Activated CD8-positive, alpha-beta T cell treated with anti-CD3 and anti-CD28 coated beads, Interleukin-2, amount 10 ng/mL, durations not matched to agents 7 days and 5 days (primary cell): ENCODE measurements at regions of chr2 and their contacts with region 1.

Region 1: DNA sequence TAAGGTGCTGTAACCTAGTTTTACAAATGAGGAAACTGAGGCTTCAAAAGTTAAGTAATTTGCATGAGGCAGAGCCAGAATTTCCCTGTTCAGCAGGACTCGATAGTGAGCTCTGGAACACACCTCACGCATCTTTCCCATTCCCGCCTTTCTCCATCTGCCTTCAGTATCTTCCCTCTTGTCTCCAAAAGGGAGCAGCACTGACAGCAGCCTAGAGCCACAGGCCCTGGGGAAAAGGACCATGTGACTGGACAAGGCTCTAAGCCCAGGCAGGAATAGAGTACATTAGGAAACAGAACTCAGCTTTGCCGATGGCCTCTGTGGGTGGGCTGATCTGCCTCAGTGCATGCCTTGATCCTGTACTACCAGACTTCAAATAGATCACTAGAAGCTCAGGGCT is 21.5 kb downstream of the GPR155 start:
- DNase-seq: no peak
- ATAC-seq: no peak
- H3K4me3 Mint-ChIP-seq: no peak overlapping the region
- H3K27ac Mint-ChIP-seq: no peak overlapping the region
- H3K4me1 Mint-ChIP-seq: no peaks in the 10 kb centered on the region
- H3K27me3 Mint-ChIP-seq: no peaks in the 10 kb centered on the region

Region 2: DNA sequence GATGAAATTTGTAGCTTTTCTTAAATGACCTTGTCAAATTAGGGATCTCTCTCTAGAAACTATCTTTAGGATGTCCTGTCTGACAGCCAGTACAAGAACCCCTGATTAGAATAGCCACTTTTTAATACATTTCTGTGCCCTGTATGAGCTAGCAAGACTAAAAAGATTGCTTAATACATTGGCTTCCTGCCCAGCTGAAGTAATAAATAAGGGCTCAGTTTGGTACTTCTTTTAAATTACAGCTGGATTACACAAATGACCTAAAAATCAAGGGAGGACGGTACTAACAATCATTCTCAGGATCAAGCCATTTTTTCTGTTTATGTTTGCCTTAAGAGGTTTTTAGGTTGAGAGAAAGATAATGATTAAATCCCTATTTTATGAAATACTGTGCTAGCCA is 205.3 kb before region 1 on chr2:
- CTCF ChIA-PET with region 1: no interaction called
- POLR2A ChIA-PET with region 1: no interaction called
- DNase-seq: no peak
- ATAC-seq: no peak
- H3K4me3 Mint-ChIP-seq: no peak overlapping the region
- H3K27ac Mint-ChIP-seq: no peak overlapping the region
- H3K4me1 Mint-ChIP-seq: no peaks in the 10 kb centered on the region
- H3K27me3 Mint-ChIP-seq: peaks cover 20% of the 10 kb centered on the region

Region 3: GRCh38 chr2:174446531-174446930 is 18.8 kb before region 1 on chr2:
- CTCF ChIA-PET with region 1: interaction called, 10 read pairs
- POLR2A ChIA-PET with region 1: interaction called, 3 read pairs
- DNase-seq: no peak
- ATAC-seq: no peak
- H3K4me3 Mint-ChIP-seq: no peak overlapping the region
- H3K27ac Mint-ChIP-seq: no peak overlapping the region
- H3K4me1 Mint-ChIP-seq: peaks cover 6% of the 10 kb centered on the region
- H3K27me3 Mint-ChIP-seq: no peaks in the 10 kb centered on the region

Region 4: DNA sequence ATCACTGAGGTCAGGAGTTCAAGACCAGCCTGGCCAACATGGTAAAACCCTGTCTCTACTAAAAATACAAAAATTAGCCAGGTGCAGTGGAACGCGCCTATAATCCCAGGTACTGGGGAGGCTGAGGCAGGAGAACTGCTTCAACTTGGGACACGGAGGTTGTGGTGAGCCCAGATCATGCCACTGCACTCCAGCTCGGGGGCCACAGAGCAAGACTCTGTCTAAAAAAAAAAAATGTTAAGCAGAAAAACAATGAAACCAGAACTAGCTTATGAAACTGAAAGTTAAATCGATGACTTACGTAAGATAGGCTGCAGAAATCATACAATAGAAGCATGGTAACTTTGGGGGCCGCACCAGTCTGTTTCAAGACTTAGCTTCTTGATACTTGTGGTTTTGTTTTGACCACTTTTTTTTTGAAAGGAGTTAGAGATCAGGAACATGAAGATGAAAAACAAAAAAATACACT is 27.7 kb after region 1 on chr2:
- CTCF ChIA-PET with region 1: interaction called, 21 read pairs
- POLR2A ChIA-PET with region 1: interaction called, 4 read pairs
- DNase-seq: peak; percentile 88
- ATAC-seq: peak; percentile 86
- H3K4me3 Mint-ChIP-seq: peak overlapping the region; percentile 80
- H3K27ac Mint-ChIP-seq: peak overlapping the region; percentile 97
- H3K4me1 Mint-ChIP-seq: peaks cover 74% of the 10 kb centered on the region
- H3K27me3 Mint-ChIP-seq: no peaks in the 10 kb centered on the region

Region 5: GRCh38 chr2:174536304-174536703 is 71.0 kb after region 1 on chr2:
- CTCF ChIA-PET with region 1: interaction called, 46 read pairs
- POLR2A ChIA-PET with region 1: no interaction called
- DNase-seq: no peak
- ATAC-seq: no peak
- H3K4me3 Mint-ChIP-seq: no peak overlapping the region
- H3K27ac Mint-ChIP-seq: no peak overlapping the region
- H3K4me1 Mint-ChIP-seq: peaks cover 3% of the 10 kb centered on the region
- H3K27me3 Mint-ChIP-seq: no peaks in the 10 kb centered on the region

Region 6: GRCh38 chr2:174553811-174554493 is 88.6 kb after region 1 on chr2:
- CTCF ChIA-PET with region 1: interaction called, 166 read pairs
- POLR2A ChIA-PET with region 1: interaction called, 3 read pairs
- DNase-seq: peak; percentile 51
- ATAC-seq: peak; percentile 58
- H3K4me3 Mint-ChIP-seq: peak overlapping the region; percentile 55
- H3K27ac Mint-ChIP-seq: peak overlapping the region; percentile 86
- H3K4me1 Mint-ChIP-seq: peaks cover 35% of the 10 kb centered on the region
- H3K27me3 Mint-ChIP-seq: no peaks in the 10 kb centered on the region

Region 7: GRCh38 chr2:174577967-174578589 is 112.8 kb after region 1 on chr2:
- CTCF ChIA-PET with region 1: interaction called, 11 read pairs
- POLR2A ChIA-PET with region 1: no interaction called
- DNase-seq: peak; percentile 76
- ATAC-seq: peak; percentile 78
- H3K4me3 Mint-ChIP-seq: no peak overlapping the region
- H3K27ac Mint-ChIP-seq: no peak overlapping the region
- H3K4me1 Mint-ChIP-seq: peaks cover 64% of the 10 kb centered on the region
- H3K27me3 Mint-ChIP-seq: no peaks in the 10 kb centered on the region

Region 8: DNA sequence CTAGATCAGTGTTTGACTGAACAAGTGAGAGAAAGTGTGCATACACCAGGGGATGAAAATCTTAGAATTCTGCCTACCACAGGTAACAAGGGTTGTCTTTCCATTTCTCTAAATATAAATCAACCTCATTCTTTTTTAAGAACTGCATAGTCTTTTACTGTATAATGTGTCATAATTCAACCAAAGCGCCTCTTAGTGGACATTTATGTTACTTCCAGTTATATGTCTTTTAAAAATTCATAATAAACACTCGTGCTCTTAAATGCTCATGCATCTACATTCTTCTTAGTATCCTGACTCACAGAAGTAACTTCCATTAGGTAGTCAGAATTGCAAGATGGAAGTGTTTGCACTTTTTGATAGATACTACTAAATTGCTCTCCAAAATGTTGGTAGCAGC is 222.8 kb after region 1 on chr2:
- CTCF ChIA-PET with region 1: interaction called, 47 read pairs
- POLR2A ChIA-PET with region 1: no interaction called
- DNase-seq: no peak
- ATAC-seq: peak; percentile 68
- H3K4me3 Mint-ChIP-seq: no peak overlapping the region
- H3K27ac Mint-ChIP-seq: no peak overlapping the region
- H3K4me1 Mint-ChIP-seq: peaks cover 44% of the 10 kb centered on the region
- H3K27me3 Mint-ChIP-seq: no peaks in the 10 kb centered on the region